ENCODE measurements at regions of chr19 and their contacts with region 1.

Region 1: GRCh38 chr19:2475702-2476450 is at the start of gene GADD45B:
- DNase-seq: peak; percentile 99
- ATAC-seq: peak; percentile 71
- H3K4me3 ChIP-seq: peak within 1 kb of the TSS; percentile 94 to 100 (median 100)
- H3K4me3 Mint-ChIP-seq: peak within 1 kb of the TSS; percentile 93
- H3K27ac ChIP-seq: peak within 1 kb of the TSS; percentile 72 to 74
- H3K27ac Mint-ChIP-seq: peak within 1 kb of the TSS; percentile 93
- H3K4me1 ChIP-seq: peaks cover 30 to 47% of the 10 kb centered on the region in 2 donors
- H3K4me1 Mint-ChIP-seq: peaks cover 34% of the 10 kb centered on the region
- H3K27me3 ChIP-seq: no peaks in the 10 kb centered on the region
- H3K27me3 Mint-ChIP-seq: no peaks in the 10 kb centered on the region
- CTCF ChIP-seq: no peak
- total RNA-seq, gene GADD45B: 166 and 167 TPM in 2 replicates

Region 2: GRCh38 chr19:2269244-2269947 is 206.5 kb before region 1 on chr19:
- CTCF ChIA-PET with region 1: no interaction called
- POLR2A ChIA-PET with region 1: interaction called, 4 read pairs
- intact Hi-C with region 1: loop called (anchors 10 kb)
- DNase-seq: peak; percentile 99
- ATAC-seq: peak; percentile 66
- H3K4me3 ChIP-seq: peak overlapping the region; percentile 59 to 100 (median 99)
- H3K4me3 Mint-ChIP-seq: peak overlapping the region; percentile 89
- H3K27ac ChIP-seq: peak overlapping the region; percentile 79 to 94
- H3K27ac Mint-ChIP-seq: peak overlapping the region; percentile 97
- H3K4me1 ChIP-seq: peaks cover 56 to 66% of the 10 kb centered on the region in 2 donors
- H3K4me1 Mint-ChIP-seq: peaks cover 52% of the 10 kb centered on the region
- H3K27me3 ChIP-seq: no peaks in the 10 kb centered on the region
- H3K27me3 Mint-ChIP-seq: no peaks in the 10 kb centered on the region
- CTCF ChIP-seq: no peak

Region 3: DNA sequence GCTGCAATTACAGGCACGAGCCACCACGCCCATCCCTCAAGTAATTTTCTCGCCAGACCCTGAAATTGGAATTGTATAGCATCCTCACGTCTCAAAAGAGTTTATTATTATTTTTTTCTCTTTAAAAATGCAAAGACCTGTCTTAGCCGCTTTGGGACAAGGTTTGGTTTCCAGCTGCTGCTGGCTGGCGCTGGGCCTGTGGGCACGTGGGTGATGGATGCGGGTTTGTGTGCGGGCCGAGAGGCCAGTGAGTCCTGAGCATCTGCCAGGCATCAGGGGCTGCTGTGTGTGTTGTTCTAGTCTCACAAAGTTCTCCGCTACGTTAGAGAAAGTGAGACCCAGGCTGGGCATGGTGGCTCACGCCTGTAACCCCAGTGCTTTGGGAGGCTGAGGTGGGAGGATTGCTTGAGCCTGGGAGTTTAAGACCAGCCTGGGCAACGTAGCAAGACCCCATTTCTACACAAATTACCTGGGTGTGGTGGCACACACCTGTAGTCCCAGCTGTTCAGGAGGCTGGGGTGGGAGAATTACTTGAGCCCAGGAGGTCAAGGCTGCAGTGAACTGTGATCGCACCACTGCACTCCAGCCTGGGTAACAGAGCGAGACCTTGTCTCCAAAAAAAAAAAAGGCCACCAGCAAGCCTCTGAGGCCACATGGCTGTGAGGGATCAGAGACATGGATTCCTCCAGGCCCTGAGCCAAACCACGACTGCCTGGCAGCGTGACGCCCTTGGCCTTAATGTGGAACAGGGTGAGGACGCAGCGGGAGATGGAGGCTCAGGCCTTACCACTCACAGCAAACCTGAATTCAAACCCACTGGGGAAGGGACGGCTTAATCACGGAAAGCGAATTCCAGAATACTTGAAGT is 120.5 kb before region 1 on chr19:
- CTCF ChIA-PET with region 1: no interaction called
- POLR2A ChIA-PET with region 1: no interaction called
- intact Hi-C with region 1: no loop called
- DNase-seq: no peak
- ATAC-seq: no peak
- H3K4me3 ChIP-seq: no peak overlapping the region
- H3K4me3 Mint-ChIP-seq: no peak overlapping the region
- H3K27ac ChIP-seq: no peak overlapping the region
- H3K27ac Mint-ChIP-seq: no peak overlapping the region
- H3K4me1 ChIP-seq: peaks cover 3 to 4% of the 10 kb centered on the region in 2 donors
- H3K4me1 Mint-ChIP-seq: peaks cover 1% of the 10 kb centered on the region
- H3K27me3 ChIP-seq: peaks cover 0 to 3% (median 1%) of the 10 kb centered on the region in 4 experiments
- H3K27me3 Mint-ChIP-seq: peaks cover 1% of the 10 kb centered on the region
- CTCF ChIP-seq: no peak

Region 4: DNA sequence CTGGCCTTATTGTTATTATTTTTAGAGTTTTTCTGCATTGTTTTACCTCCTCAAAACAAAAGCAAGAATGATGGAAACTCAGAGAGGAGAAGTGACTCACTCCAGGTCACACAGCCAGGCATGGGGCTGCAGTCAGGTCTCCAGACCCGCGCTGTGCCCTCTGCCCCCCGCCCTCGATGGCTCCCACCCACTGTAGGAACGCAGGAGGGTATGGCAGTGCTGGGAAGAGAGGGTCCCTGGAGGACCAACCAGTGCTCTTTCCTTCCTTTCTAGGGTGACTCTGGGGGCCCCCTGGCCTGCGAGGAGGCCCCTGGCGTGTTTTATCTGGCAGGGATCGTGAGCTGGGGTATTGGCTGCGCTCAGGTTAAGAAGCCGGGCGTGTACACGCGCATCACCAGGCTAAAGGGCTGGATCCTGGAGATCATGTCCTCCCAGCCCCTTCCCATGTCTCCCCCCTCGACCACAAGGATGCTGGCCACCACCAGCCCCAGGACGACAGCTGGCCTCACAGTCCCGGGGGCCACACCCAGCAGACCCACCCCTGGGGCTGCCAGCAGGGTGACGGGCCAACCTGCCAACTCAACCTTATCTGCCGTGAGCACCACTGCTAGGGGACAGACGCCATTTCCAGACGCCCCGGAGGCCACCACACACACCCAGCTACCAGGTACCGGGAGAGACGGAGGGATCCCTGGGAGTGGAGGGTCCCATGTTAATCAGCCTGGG is 54.1 kb before region 1 on chr19:
- CTCF ChIA-PET with region 1: no interaction called
- POLR2A ChIA-PET with region 1: no interaction called
- intact Hi-C with region 1: no loop called
- DNase-seq: no peak
- ATAC-seq: no peak
- H3K4me3 ChIP-seq: no peak overlapping the region
- H3K4me3 Mint-ChIP-seq: no peak overlapping the region
- H3K27ac ChIP-seq: no peak overlapping the region
- H3K27ac Mint-ChIP-seq: no peak overlapping the region
- H3K4me1 ChIP-seq: peaks cover 9 to 11% of the 10 kb centered on the region in 2 donors
- H3K4me1 Mint-ChIP-seq: peaks cover 7% of the 10 kb centered on the region
- H3K27me3 ChIP-seq: no peaks in the 10 kb centered on the region
- H3K27me3 Mint-ChIP-seq: no peaks in the 10 kb centered on the region
- CTCF ChIP-seq: no peak

Region 5: DNA sequence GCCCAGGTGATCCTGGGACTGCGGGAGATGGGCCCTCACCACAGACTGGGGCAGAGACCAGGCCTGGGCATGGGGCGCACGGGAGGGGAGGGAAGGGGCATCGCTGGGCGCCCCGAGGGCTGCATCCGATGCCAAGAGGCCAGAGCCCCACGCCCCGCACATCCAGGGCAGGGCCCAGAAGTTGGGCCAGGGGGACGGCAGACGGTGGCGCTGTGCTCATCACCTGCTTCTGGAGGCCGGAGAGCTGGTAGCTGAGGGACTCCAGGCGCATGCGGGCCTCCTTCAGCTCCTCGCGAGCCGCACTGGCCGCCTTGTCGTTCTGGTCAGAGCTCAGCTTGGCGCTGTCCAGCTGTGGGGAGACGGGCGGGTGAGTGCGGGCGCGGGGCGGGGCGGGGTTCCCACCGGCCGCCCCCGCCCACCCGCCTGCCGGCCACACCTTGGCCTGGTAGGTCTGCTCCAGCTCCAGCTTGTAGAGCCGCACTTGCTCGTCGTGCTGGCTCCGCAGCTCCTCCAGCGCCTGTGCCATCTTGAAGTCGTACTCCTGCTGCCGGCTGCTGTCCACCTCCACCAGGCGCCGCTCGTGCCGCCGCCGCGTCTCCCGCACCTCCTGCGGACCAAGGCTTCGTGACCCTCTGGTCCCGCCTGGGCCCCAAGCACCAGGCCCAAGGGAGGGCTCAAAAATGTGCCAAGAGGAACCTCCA is 41.2 kb before region 1 on chr19:
- CTCF ChIA-PET with region 1: no interaction called
- POLR2A ChIA-PET with region 1: no interaction called
- intact Hi-C with region 1: no loop called
- DNase-seq: no peak
- ATAC-seq: no peak
- H3K4me3 ChIP-seq: no peak overlapping the region
- H3K4me3 Mint-ChIP-seq: no peak overlapping the region
- H3K27ac ChIP-seq: no peak overlapping the region
- H3K27ac Mint-ChIP-seq: no peak overlapping the region
- H3K4me1 ChIP-seq: no peaks in the 10 kb centered on the region
- H3K4me1 Mint-ChIP-seq: no peaks in the 10 kb centered on the region
- H3K27me3 ChIP-seq: no peaks in the 10 kb centered on the region
- H3K27me3 Mint-ChIP-seq: no peaks in the 10 kb centered on the region
- CTCF ChIP-seq: no peak

Region 6: GRCh38 chr19:2494444-2495129 is 18.7 kb after region 1 on chr19:
- CTCF ChIA-PET with region 1: interaction called, 4 read pairs
- POLR2A ChIA-PET with region 1: interaction called, 10 read pairs
- intact Hi-C with region 1: loop called (anchors 2 kb)
- DNase-seq: peak; percentile 76
- ATAC-seq: peak; percentile 71
- H3K4me3 ChIP-seq: peak overlapping the region; percentile 12 to 85 (median 68)
- H3K4me3 Mint-ChIP-seq: peak overlapping the region; percentile 85
- H3K27ac ChIP-seq: peak overlapping the region in 1 of 2 donors; percentile 41
- H3K27ac Mint-ChIP-seq: peak overlapping the region; percentile 32
- H3K4me1 ChIP-seq: peaks cover 31 to 40% of the 10 kb centered on the region in 2 donors
- H3K4me1 Mint-ChIP-seq: peaks cover 34% of the 10 kb centered on the region
- H3K27me3 ChIP-seq: peaks cover 0 to 43% (median 17%) of the 10 kb centered on the region in 4 experiments
- H3K27me3 Mint-ChIP-seq: peaks cover 27% of the 10 kb centered on the region
- CTCF ChIP-seq: no peak

Region 7: GRCh38 chr19:2561895-2562294 is 86.0 kb after region 1 on chr19:
- CTCF ChIA-PET with region 1: interaction called, 14 read pairs
- POLR2A ChIA-PET with region 1: interaction called, 24 read pairs
- intact Hi-C with region 1: no loop called
- DNase-seq: peak; percentile 82
- ATAC-seq: peak; percentile 94
- H3K4me3 ChIP-seq: peak overlapping the region in 4 of 5 experiments; percentile 42 to 63 (median 56)
- H3K4me3 Mint-ChIP-seq: peak overlapping the region; percentile 89
- H3K27ac ChIP-seq: peak overlapping the region; percentile 65 to 81
- H3K27ac Mint-ChIP-seq: peak overlapping the region; percentile 91
- H3K4me1 ChIP-seq: peaks cover 16 to 33% of the 10 kb centered on the region in 2 donors
- H3K4me1 Mint-ChIP-seq: peaks cover 45% of the 10 kb centered on the region
- H3K27me3 ChIP-seq: no peaks in the 10 kb centered on the region
- H3K27me3 Mint-ChIP-seq: no peaks in the 10 kb centered on the region
- CTCF ChIP-seq: no peak

Region 8: DNA sequence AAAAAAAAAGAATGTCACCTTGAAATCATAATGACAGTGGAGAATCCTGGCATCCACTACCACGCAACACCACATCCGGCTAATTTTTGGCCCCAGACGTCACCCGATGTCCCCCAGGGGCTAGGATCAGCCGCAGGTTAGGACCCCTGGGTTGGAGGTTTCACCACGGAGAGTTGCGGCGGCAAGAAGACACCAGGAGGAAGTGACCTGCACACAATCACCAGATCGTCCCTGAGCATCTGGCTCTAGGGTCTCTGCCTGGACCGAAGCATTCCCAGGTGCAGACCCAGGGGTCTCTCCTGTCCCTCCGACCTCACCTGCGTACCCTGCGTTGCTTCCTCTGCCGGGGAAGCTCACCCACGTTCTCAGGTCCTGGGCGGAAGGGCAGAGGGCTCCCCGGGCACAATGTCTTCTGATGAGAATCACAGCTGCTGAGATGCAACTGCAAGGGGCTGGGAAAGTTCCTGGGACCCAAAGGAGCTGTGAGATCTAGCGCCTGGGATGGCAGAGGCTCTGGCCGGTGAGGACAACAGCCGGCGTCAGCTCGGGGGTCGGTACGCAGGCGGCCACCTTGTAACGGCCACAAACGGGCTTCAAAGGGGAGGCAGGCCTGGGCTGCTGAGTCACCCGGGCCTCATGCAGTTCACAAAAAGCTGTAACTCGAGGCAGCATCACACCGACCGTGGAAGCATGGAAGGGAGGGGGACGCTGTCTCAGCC is 111.3 kb after region 1 on chr19:
- CTCF ChIA-PET with region 1: no interaction called
- POLR2A ChIA-PET with region 1: no interaction called
- intact Hi-C with region 1: no loop called
- DNase-seq: no peak
- ATAC-seq: no peak
- H3K4me3 ChIP-seq: no peak overlapping the region
- H3K4me3 Mint-ChIP-seq: no peak overlapping the region
- H3K27ac ChIP-seq: no peak overlapping the region
- H3K27ac Mint-ChIP-seq: no peak overlapping the region
- H3K4me1 ChIP-seq: no peaks in the 10 kb centered on the region
- H3K4me1 Mint-ChIP-seq: peaks cover 23% of the 10 kb centered on the region
- H3K27me3 ChIP-seq: no peaks in the 10 kb centered on the region
- H3K27me3 Mint-ChIP-seq: no peaks in the 10 kb centered on the region
- CTCF ChIP-seq: no peak

Region 9: GRCh38 chr19:2610637-2611482 is 135.0 kb after region 1 on chr19:
- CTCF ChIA-PET with region 1: interaction called, 134 read pairs
- POLR2A ChIA-PET with region 1: interaction called, 48 read pairs
- intact Hi-C with region 1: loop called (anchors 1 kb)
- DNase-seq: peak; percentile 89
- ATAC-seq: peak; percentile 58
- H3K4me3 ChIP-seq: peak overlapping the region in 4 of 5 experiments; percentile 31 to 69 (median 56)
- H3K4me3 Mint-ChIP-seq: peak overlapping the region; percentile 88
- H3K27ac ChIP-seq: peak overlapping the region; percentile 88 to 89
- H3K27ac Mint-ChIP-seq: peak overlapping the region; percentile 91
- H3K4me1 ChIP-seq: peaks cover 61 to 83% of the 10 kb centered on the region in 2 donors
- H3K4me1 Mint-ChIP-seq: peaks cover 74% of the 10 kb centered on the region
- H3K27me3 ChIP-seq: no peaks in the 10 kb centered on the region
- H3K27me3 Mint-ChIP-seq: no peaks in the 10 kb centered on the region
- CTCF ChIP-seq: peak; percentile 93

Region 10: DNA sequence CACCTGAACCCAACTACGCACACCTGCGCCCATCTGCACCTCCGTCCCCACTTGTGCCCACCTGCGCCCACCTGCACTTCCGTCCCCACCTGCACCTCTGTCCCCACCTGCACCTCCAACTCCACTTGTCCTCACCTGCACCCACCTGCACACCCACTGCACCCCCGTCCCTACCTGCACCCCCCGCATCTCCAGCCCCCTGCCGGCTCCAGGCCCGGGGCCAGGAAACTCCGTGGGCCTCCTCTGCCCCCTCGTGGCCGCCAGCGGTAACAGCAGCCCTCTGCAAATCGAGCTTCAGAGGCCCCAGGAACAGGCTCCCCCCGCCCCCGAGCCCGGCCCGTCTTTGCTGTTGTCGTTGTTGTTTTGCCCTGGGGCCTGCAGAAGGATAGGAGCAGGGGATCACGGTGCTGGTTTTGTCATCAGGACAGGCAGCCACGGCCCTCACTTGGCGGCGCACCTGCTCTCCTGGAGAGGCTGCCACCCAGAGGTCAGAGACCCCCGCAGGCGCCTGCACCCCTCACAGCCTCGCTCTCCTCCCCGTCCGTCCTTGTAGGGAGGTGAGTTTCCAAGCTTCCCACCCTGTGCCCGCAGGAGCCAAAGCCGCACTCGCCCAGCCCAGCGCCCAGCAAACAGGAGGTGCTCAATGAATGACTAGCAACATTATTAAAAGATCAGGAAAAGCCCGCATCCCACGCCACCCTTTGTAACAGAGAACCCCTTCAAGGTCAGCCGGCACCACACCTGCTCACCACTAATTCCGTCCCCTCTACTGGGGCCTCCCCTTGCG is 161.2 kb after region 1 on chr19:
- CTCF ChIA-PET with region 1: interaction called, 63 read pairs
- POLR2A ChIA-PET with region 1: interaction called, 46 read pairs
- intact Hi-C with region 1: loop called (anchors 1 kb)
- DNase-seq: peak; percentile 85
- ATAC-seq: peak; percentile 74
- H3K4me3 ChIP-seq: no peak overlapping the region
- H3K4me3 Mint-ChIP-seq: peak overlapping the region; percentile 47
- H3K27ac ChIP-seq: no peak overlapping the region
- H3K27ac Mint-ChIP-seq: peak overlapping the region; percentile 74
- H3K4me1 ChIP-seq: peaks cover 52 to 74% of the 10 kb centered on the region in 2 donors
- H3K4me1 Mint-ChIP-seq: peaks cover 81% of the 10 kb centered on the region
- H3K27me3 ChIP-seq: no peaks in the 10 kb centered on the region
- H3K27me3 Mint-ChIP-seq: no peaks in the 10 kb centered on the region
- CTCF ChIP-seq: peak; percentile 71

Region 11: GRCh38 chr19:2739602-2740313 is 263.9 kb after region 1 on chr19 and contains the start of gene SLC39A3:
- CTCF ChIA-PET with region 1: no interaction called
- POLR2A ChIA-PET with region 1: no interaction called
- intact Hi-C with region 1: loop called (anchors 10 kb)
- DNase-seq: peak; percentile 98
- ATAC-seq: peak; percentile 100
- H3K4me3 ChIP-seq: peak within 1 kb of the TSS; percentile 50 to 93 (median 87)
- H3K4me3 Mint-ChIP-seq: peak within 1 kb of the TSS; percentile 92
- H3K27ac ChIP-seq: peak within 1 kb of the TSS; percentile 26 to 77
- H3K27ac Mint-ChIP-seq: peak within 1 kb of the TSS; percentile 81
- H3K4me1 ChIP-seq: peaks cover 10 to 20% of the 10 kb centered on the region in 2 donors
- H3K4me1 Mint-ChIP-seq: peaks cover 25% of the 10 kb centered on the region
- H3K27me3 ChIP-seq: no peaks in the 10 kb centered on the region
- H3K27me3 Mint-ChIP-seq: peaks cover 10% of the 10 kb centered on the region
- CTCF ChIP-seq: no peak
- total RNA-seq, gene SLC39A3: 32.8 and 36.4 TPM in 2 replicates

Measured in B cell (primary cell).